ENCODE measurements at regions of chr1 and their contacts with region 1.

Region 1: GRCh38 chr1:67760030-67760821 is 73.0 kb downstream of the GNG12 start:
- DNase-seq: peak; percentile 20
- H3K4me3 Mint-ChIP-seq: no peak overlapping the region
- H3K27ac Mint-ChIP-seq: no peak overlapping the region
- H3K4me1 Mint-ChIP-seq: no peaks in the 10 kb centered on the region
- H3K27me3 Mint-ChIP-seq: peaks cover 26% of the 10 kb centered on the region

Region 2: DNA sequence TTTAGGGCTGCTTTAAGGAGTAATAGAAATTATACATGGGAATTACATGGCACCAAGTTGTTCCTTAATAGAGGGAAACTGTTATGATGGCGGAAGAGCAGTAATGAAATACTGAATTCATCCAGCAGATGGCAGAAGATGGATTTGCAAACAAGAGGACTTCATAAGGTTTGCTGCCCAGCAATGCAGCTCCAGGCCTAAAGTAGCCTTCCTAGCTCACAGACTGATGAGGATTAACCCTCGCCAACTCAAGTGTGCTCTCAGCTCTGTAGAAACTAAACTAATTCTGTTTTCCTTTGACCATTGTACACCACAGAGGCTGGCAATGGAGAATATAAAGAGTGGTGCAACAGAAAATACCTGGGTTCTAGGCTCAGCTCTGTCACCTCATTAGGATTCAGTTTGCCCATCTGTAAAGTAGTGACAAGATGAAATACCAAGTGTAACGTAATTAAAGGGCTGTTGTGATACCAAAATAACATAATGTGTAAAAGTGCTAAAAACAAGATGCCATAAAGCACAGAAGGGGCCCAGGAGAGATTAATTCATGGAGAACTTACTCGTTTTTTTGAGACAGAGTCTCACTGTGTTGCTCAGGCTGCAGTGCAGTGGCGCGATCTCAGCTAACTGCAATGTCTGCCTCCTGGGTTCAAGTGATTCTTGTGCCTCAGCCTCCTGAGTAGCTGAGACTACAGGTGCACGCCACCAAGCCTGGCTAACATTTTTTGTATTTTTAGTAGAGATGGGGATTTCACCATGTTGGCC is 227.6 kb before region 1 on chr1:
- intact Hi-C with region 1: loop called (anchors 1 kb)
- DNase-seq: no peak
- H3K4me3 Mint-ChIP-seq: no peak overlapping the region
- H3K27ac Mint-ChIP-seq: no peak overlapping the region
- H3K4me1 Mint-ChIP-seq: peaks cover 9% of the 10 kb centered on the region
- H3K27me3 Mint-ChIP-seq: peaks cover 4% of the 10 kb centered on the region

Region 3: DNA sequence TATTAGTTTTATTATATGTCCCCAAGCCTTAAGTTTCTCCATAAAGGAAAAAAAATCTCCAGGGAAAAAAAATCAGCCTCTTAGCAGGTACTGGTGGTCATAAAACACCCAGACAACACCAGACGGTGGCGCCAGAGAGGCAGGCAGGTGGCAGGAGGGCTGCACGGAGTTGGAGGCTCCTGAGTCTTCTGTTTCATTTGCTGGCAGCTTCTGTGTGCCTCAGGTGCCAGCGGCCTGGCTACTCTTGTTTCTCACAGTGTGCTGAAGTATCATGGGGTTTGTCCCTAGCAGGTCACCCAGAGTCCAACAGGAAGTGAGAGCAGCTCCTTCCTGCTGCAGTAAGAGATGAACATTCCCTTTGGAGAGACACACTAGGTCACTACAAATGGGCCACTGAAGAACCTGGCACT is 198.5 kb before region 1 on chr1:
- intact Hi-C with region 1: loop called (anchors 1 kb)
- DNase-seq: peak; percentile 67
- H3K4me3 Mint-ChIP-seq: no peak overlapping the region
- H3K27ac Mint-ChIP-seq: no peak overlapping the region
- H3K4me1 Mint-ChIP-seq: peaks cover 4% of the 10 kb centered on the region
- H3K27me3 Mint-ChIP-seq: peaks cover 6% of the 10 kb centered on the region

Measured in activated T-helper 2 cell treated with anti-CD3 and anti-CD28 coated beads, Interferon-gamma antibody, Interleukin-2, Interleukin-4, amounts not matched to agents 10 μg/mL and 5 μg/mL and 100 μg/mL, durations not matched to agents 14 hours and 24 hours and 36 hours (primary cell).